H1 (cell line): ENCODE measurements at regions of chr5 and their contacts with region 1.

Region 1: DNA sequence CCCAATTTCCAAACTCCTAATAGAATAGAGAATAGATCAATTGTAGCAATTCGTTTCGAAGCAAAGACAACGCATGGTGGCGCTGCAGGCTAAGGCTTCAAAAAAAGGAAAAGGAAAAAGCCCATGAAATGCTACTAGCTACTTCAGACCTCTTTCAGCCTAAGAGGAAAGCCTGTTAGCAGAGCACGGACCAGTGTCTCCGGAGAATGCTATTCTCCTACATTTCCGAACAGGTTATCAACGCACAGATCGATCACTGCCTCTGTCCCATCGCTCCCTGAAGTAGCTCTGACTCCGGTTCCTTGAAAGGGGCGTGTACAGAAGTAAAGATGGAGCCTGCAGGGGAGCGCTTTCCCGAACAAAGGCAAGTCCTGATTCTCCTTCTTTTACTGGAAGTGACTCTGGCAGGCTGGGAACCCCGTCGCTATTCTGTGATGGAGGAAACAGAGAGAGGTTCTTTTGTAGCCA is at the start of gene PCDHB15:
- DNase-seq: peak in 1 of 2 experiments; percentile 83
- H3K4me3 ChIP-seq: peak within 1 kb of the TSS; percentile 19 to 69 (median 44); a peak in 7 of 8 replicates
- H3K27ac ChIP-seq: no peak within 1 kb of the TSS
- H3K4me1 ChIP-seq: peaks cover 0 to 3% (median 0%) of the 10 kb centered on the region in 4 experiments; a peak in 1 of 7 replicates
- H3K27me3 ChIP-seq: no peaks in the 10 kb centered on the region
- CTCF ChIP-seq: peak in 2 of 3 experiments; percentile 61 to 64; a peak in 3 of 4 replicates
- EP300 ChIP-seq: no peak
- POLR2A ChIP-seq: peak in 1 of 2 experiments; percentile 55; a peak in 1 of 3 replicates
- RAD21 ChIP-seq: peak; percentile 78 to 80
- total RNA-seq, gene PCDHB15: 3.9 and 4.0 TPM in 2 replicates

Region 2: DNA sequence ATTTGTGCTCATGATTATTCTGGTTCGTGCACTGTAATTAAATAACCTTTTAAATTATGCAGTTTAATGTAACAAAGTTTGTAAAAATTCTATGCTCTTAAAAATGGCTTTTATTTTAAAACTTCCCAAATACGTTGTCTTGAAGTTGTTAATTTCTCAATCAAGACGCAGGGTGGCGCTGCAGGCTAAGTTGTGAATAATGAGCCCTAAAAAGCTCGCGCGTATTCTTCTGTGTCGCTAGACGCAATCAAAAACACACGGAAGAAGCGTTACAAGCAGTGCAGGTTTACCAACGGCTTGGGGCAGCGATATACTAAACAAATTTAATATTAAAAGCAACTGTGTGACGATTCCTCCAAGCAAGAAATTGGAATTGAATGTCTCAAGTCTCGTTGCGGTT is 123.7 kb before region 1 on chr5 and contains the start of gene PCDHB4:
- CTCF ChIA-PET with region 1: interaction called, 11 read pairs
- POLR2A ChIA-PET with region 1: no interaction called
- DNase-seq: no peak
- H3K4me3 ChIP-seq: no peak within 1 kb of the TSS; a peak in 2 of 8 replicates
- H3K27ac ChIP-seq: no peak within 1 kb of the TSS
- H3K4me1 ChIP-seq: no peaks in the 10 kb centered on the region
- H3K27me3 ChIP-seq: no peaks in the 10 kb centered on the region
- CTCF ChIP-seq: peak; percentile 10 to 70 (median 63); a peak in 3 of 4 replicates
- EP300 ChIP-seq: no peak
- POLR2A ChIP-seq: no peak
- RAD21 ChIP-seq: peak; percentile 77 to 78
- total RNA-seq, gene PCDHB4: 1.4 and 1.5 TPM in 2 replicates

Region 3: GRCh38 chr5:141199359-141200235 is 45.7 kb before region 1 on chr5 and contains the start of gene PCDHB11:
- CTCF ChIA-PET with region 1: interaction called, 20 read pairs
- POLR2A ChIA-PET with region 1: no interaction called
- DNase-seq: no peak
- H3K4me3 ChIP-seq: peak within 1 kb of the TSS in 1 of 4 experiments; percentile 25; a peak in 2 of 8 replicates
- H3K27ac ChIP-seq: no peak within 1 kb of the TSS
- H3K4me1 ChIP-seq: no peaks in the 10 kb centered on the region
- H3K27me3 ChIP-seq: no peaks in the 10 kb centered on the region
- CTCF ChIP-seq: peak in 2 of 3 experiments; percentile 55 to 66; a peak in 3 of 4 replicates
- EP300 ChIP-seq: no peak
- POLR2A ChIP-seq: no peak
- RAD21 ChIP-seq: peak; percentile 68 to 73
- total RNA-seq, gene PCDHB11: 0.86 and 1.4 TPM in 2 replicates

Region 4: DNA sequence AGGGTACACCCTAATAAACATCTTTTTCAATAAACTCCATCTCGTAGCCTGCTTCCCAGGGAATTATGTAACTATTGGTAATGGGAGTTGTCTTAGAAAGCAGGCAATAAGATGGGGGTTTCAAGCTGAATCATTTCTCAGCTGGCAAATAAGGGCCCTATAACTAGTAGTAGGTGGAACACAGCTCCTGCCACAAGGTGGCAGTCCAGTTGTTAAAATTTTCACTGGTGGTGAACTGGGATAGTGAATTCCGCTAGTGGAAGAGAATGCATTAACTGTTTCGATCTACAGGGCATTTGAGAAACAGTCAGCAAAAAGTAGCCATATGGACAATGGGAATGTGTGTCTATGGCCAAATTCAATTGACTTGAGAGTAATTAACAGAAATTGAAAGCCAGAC is 27.6 kb after region 1 on chr5:
- CTCF ChIA-PET with region 1: interaction called, 35 read pairs
- POLR2A ChIA-PET with region 1: interaction called, 3 read pairs
- DNase-seq: peak; percentile 3 to 44
- H3K4me3 ChIP-seq: no peak overlapping the region
- H3K27ac ChIP-seq: no peak overlapping the region
- H3K4me1 ChIP-seq: no peaks in the 10 kb centered on the region
- H3K27me3 ChIP-seq: no peaks in the 10 kb centered on the region
- CTCF ChIP-seq: peak in 2 of 3 experiments; percentile 41 to 49; a peak in 2 of 4 replicates
- EP300 ChIP-seq: no peak
- POLR2A ChIP-seq: no peak
- RAD21 ChIP-seq: peak; percentile 37 to 49; a peak in 3 of 4 replicates

Region 5: DNA sequence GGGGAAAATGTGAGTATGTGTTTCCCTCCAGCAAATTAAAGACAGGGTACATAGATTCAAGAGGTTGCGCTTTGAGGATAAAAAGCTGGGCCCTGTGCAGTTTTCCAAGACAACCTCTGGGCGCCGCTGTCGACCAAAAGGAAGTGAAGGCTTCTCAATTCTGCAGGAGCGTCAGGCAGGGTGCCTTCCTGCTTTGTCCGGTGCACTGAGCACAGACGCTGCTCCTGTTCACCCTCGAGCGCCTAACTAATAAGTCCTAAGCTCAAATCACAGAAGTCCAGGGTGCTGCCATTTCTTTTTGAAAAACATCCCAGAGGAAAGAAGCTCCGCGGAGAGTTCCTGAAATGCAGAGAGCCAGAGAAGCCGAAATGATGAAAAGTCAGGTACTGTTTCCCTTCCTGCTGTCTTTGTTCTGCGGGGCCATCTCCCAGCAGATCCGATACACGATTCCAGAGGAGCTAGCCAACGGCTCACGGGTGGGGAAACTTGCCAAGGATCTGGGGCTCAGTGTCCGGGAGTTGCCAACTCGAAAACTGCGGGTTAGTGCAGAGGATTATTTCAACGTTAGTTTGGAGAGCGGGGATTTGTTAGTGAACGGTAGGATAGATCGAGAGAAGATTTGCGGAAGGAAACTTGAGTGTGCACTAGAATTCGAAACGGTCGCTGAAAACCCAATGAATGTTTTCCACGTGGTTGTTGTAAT is 104.8 kb after region 1 on chr5 and contains the start of gene PCDHGB1:
- CTCF ChIA-PET with region 1: interaction called, 18 read pairs
- POLR2A ChIA-PET with region 1: interaction called, 5 read pairs
- DNase-seq: peak in 1 of 2 experiments; percentile 83
- H3K4me3 ChIP-seq: peak within 1 kb of the TSS; percentile 17 to 53 (median 31); a peak in 7 of 8 replicates
- H3K27ac ChIP-seq: no peak within 1 kb of the TSS
- H3K4me1 ChIP-seq: peaks cover 0 to 5% (median under 1%) of the 10 kb centered on the region in 4 experiments; a peak in 1 of 7 replicates
- H3K27me3 ChIP-seq: no peaks in the 10 kb centered on the region
- CTCF ChIP-seq: peak; percentile 69 to 86 (median 75)
- EP300 ChIP-seq: no peak
- POLR2A ChIP-seq: peak in 1 of 2 experiments; percentile 65; a peak in 1 of 3 replicates
- RAD21 ChIP-seq: peak; percentile 74 to 81
- total RNA-seq, gene PCDHGB1: 2.8 and 3.9 TPM in 2 replicates

Region 6: GRCh38 chr5:141512390-141512910 is 267.2 kb after region 1 on chr5:
- CTCF ChIA-PET with region 1: interaction called, 81 read pairs
- POLR2A ChIA-PET with region 1: no interaction called
- DNase-seq: peak; percentile 93 to 99
- H3K4me3 ChIP-seq: peak overlapping the region; percentile 61 to 83 (median 76)
- H3K27ac ChIP-seq: no peak overlapping the region
- H3K4me1 ChIP-seq: peaks cover 7 to 35% (median 19%) of the 10 kb centered on the region in 4 experiments
- H3K27me3 ChIP-seq: no peaks in the 10 kb centered on the region
- CTCF ChIP-seq: peak in 2 of 3 experiments; percentile 97 to 98; a peak in 3 of 4 replicates
- EP300 ChIP-seq: no peak; a peak in 1 of 3 replicates
- POLR2A ChIP-seq: peak in 1 of 2 experiments; percentile 60; a peak in 2 of 3 replicates
- RAD21 ChIP-seq: peak; percentile 80 to 86